Common myeloid progenitor, CD34-positive (primary cell): ENCODE measurements at regions of chr20 and their contacts with region 1.

Region 1: DNA sequence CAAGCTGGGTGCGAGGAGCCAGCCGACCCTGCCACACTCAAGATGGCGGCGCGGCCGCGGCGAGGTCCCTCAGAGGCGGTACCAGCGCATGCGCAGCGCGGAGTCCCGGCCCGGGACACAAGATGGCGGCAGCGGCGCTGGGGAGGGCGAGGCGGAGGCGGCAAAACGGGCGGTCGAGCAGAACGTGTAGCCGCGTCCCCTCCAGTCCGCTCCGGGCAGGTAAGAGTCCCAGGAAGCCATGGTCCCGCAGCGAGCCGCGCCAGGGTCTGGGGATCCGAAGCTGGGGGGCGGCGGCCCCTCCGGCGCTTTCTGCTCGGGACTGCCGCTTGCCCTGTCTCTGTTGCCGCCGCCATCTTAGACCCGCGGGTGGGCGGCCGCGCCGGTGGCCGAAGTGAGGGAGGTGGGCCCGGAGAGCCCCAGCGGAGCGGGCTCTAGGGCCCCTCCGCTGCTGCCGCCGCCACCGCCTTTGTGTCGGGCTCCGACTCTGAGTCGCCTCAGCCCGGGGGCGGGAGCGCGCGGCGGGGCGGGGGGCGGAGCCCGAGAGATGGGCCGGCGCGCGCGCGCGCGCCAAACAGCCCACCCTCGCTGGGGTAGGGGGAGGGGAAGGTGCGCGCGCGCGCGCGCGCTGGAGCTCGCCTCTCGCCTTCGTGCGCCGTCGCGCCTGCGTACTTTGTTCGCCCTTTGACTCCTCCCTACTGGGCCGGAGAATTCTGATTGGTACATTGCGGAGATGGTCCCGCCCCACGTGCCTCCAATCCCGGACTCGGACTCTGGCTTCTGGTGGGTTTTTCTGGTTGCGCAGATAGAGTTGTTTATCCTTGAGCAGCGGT is at the start of gene PCIF1:
- DNase-seq: peak; percentile 97 to 99 (median 98)
- H3K4me3 ChIP-seq: peak within 1 kb of the TSS; percentile 73 to 99 (median 96)
- H3K27ac ChIP-seq: peak within 1 kb of the TSS; percentile 96 to 98
- H3K4me1 ChIP-seq: peaks cover 6 to 39% (median 25%) of the 10 kb centered on the region in 4 experiments
- H3K27me3 ChIP-seq: no peaks in the 10 kb centered on the region

Region 2: GRCh38 chr20:45880988-45881788 is 53.6 kb before region 1 on chr20 and contains the start of gene ZSWIM1:
- CTCF ChIA-PET with region 1: interaction called, 5 read pairs
- POLR2A ChIA-PET with region 1: interaction called, 10 read pairs
- DNase-seq: peak; percentile 98 to 99 (median 98)
- H3K4me3 ChIP-seq: peak within 1 kb of the TSS; percentile 37 to 91 (median 79)
- H3K27ac ChIP-seq: peak within 1 kb of the TSS; percentile 90 to 92
- H3K4me1 ChIP-seq: peaks cover 9 to 42% (median 35%) of the 10 kb centered on the region in 4 experiments
- H3K27me3 ChIP-seq: no peaks in the 10 kb centered on the region

Region 3: GRCh38 chr20:45899041-45899835 is 35.6 kb before region 1 on chr20:
- CTCF ChIA-PET with region 1: no interaction called
- POLR2A ChIA-PET with region 1: no interaction called
- DNase-seq: no peak
- H3K4me3 ChIP-seq: no peak overlapping the region
- H3K27ac ChIP-seq: no peak overlapping the region
- H3K4me1 ChIP-seq: no peaks in the 10 kb centered on the region
- H3K27me3 ChIP-seq: no peaks in the 10 kb centered on the region

Region 4: GRCh38 chr20:45910670-45911485 is 23.9 kb before region 1 on chr20:
- CTCF ChIA-PET with region 1: interaction called, 8 read pairs
- POLR2A ChIA-PET with region 1: interaction called, 17 read pairs
- DNase-seq: peak; percentile 100
- H3K4me3 ChIP-seq: peak overlapping the region; percentile 37 to 79 (median 69)
- H3K27ac ChIP-seq: peak overlapping the region; percentile 46 to 74
- H3K4me1 ChIP-seq: peaks cover 13 to 40% (median 34%) of the 10 kb centered on the region in 4 experiments
- H3K27me3 ChIP-seq: no peaks in the 10 kb centered on the region

Region 5: GRCh38 chr20:45924391-45925261 is 10.2 kb before region 1 on chr20:
- CTCF ChIA-PET with region 1: interaction called, 14 read pairs
- POLR2A ChIA-PET with region 1: interaction called, 7 read pairs
- DNase-seq: no peak
- H3K4me3 ChIP-seq: peak overlapping the region in 1 of 7 experiments; percentile 42
- H3K27ac ChIP-seq: no peak overlapping the region
- H3K4me1 ChIP-seq: peaks cover 0 to 5% (median 0%) of the 10 kb centered on the region in 4 experiments
- H3K27me3 ChIP-seq: no peaks in the 10 kb centered on the region

Region 6: DNA sequence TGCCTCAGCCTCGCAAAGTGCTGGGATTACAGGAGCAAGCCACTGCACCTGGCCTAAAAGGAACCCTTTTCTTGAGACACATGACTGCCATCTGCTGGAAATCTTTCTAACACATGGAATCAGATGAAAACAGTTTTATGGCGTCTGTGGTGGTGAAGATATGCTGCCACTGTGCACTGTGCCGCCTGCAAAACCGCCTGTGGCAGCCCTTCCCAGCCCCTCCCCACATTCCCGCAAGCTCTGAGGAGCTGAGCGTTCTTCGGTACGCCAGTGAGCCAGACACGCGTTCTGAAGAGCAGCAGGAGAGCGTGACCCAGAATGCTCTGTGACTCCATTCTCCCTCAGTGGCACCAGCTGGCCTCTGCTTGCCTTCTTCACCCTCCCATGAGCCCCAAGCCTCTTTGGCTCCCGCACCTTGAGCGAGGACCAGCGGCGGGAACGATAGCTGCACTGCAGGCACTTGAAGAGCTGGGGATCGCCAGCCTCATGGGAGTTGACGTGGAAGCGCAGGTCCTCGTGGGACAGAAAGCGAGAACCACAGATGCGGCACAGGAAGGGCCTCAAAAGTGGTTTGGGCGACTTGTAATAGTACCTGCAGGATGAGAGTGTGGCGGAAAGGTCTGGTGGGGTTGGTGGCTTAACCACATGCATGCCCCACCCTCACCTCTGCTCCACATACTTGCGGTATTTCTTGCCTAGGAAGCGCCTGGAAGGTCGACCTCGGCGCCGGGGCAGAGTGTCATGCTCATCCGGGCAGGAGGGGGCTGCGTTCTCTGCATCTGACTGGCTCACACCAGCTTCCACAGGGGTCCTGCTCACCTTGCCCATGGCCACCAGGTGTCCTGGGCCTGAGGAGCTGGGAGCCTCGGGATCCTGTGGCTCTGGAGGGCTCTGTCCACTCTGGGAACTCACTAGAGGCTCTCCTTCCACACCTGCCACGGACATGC is 28.5 kb after region 1 on chr20:
- CTCF ChIA-PET with region 1: interaction called, 17 read pairs
- POLR2A ChIA-PET with region 1: interaction called, 9 read pairs
- DNase-seq: peak; percentile 44 to 75 (median 69)
- H3K4me3 ChIP-seq: no peak overlapping the region
- H3K27ac ChIP-seq: no peak overlapping the region
- H3K4me1 ChIP-seq: peaks cover 0 to 1% (median under 1%) of the 10 kb centered on the region in 4 experiments
- H3K27me3 ChIP-seq: no peaks in the 10 kb centered on the region

Region 7: DNA sequence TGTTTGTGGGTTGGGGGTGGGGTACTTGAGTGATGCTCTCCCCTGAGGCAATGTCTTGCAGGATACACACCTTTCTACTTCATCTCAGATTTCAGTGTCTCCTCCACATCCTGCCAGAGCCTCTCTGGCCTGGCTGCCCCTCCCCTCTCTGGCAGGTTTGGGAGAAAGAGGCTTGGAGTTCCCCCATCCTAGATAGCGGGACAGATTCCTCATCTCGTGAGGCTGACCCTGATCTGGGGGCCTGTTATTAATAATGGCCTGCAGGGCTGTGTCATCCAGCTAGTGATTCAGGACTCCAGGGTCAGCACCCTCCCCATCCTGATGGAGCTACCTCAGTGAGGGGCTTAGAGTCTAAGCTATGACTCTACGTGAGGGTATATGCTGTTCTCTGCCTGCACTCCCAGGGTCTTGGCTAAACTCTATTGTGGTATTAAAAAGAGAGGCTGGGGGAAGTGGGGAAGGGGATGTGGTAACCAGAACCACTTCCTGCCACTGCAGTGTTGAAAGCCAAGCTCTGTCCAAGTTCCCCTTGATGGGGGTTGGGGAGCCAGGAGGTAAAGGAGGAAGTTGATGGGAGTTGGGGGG is 70.2 kb after region 1 on chr20:
- CTCF ChIA-PET with region 1: no interaction called
- POLR2A ChIA-PET with region 1: no interaction called
- DNase-seq: peak; percentile 93 to 97 (median 97)
- H3K4me3 ChIP-seq: peak overlapping the region in 5 of 7 experiments; percentile 16 to 54 (median 33)
- H3K27ac ChIP-seq: no peak overlapping the region
- H3K4me1 ChIP-seq: peaks cover 16 to 65% (median 48%) of the 10 kb centered on the region in 4 experiments
- H3K27me3 ChIP-seq: peaks cover 0 to 75% (median 36%) of the 10 kb centered on the region in 5 experiments